CD4-positive, alpha-beta T cell (primary cell): ENCODE measurements at regions of chr17 and their contacts with region 1.

Region 1: GRCh38 chr17:17591355-17592298 is at the start of gene PEMT:
- DNase-seq: peak; percentile 84 to 98 (median 91)
- ATAC-seq: peak; percentile 87
- H3K4me3 ChIP-seq: peak within 1 kb of the TSS; percentile 64
- H3K4me3 Mint-ChIP-seq: peak within 1 kb of the TSS; percentile 89
- H3K27ac ChIP-seq: peak within 1 kb of the TSS; percentile 81 to 85
- H3K27ac Mint-ChIP-seq: peak within 1 kb of the TSS; percentile 92
- H3K4me1 ChIP-seq: peaks cover 25% of the 10 kb centered on the region
- H3K4me1 Mint-ChIP-seq: peaks cover 21% of the 10 kb centered on the region
- H3K27me3 ChIP-seq: no peaks in the 10 kb centered on the region
- H3K27me3 Mint-ChIP-seq: no peaks in the 10 kb centered on the region
- CTCF ChIP-seq: no peak
- total RNA-seq, gene PEMT: 11.4 to 12.0 TPM

Region 2: DNA sequence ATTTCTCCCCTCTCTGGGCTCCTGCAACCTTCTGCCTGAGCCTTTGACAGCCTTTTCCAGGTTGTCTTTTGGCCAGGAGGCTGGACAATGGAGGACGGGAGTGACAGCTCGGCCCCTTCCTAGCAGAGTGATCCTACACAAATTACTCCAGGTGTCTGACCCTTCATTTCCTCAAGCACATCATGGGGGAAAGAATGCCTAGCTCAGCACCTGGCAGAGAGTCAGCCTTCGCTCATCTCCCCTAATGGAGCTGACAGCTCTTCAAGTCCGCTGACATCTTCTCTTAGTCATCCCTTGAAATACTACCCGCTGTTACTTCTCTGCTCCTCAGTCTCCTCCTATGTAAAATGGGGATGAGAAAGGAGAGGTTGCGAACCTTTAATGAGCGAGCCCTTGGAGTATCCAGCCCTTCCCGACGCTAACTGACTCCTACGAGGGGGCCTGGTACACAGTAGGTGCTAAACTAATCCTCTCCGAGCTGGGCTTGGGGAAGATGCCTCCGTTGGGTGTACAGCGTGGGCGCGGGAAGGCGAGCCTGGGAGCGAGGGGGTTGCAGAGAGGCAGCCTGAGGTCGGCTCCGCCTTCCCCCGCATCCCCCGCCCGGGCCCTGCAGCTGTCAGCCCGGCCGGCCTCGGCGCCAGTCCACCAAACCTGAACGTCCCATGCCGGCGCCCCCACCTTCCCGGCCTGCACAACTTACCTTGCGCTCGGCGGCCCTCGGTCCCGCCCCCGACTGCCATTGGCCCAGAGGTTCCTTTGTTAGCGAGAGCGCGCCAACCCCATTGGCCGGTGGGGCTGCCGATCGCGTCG is 549.9 kb before region 1 on chr17:
- CTCF ChIA-PET with region 1: no interaction called
- POLR2A ChIA-PET with region 1: no interaction called
- intact Hi-C with region 1: loop called in 1 of 2 experiments (anchors 5 kb)
- DNase-seq: peak; percentile 92 to 98 (median 97)
- ATAC-seq: peak; percentile 98
- H3K4me3 ChIP-seq: peak overlapping the region; percentile 59
- H3K4me3 Mint-ChIP-seq: peak overlapping the region; percentile 81
- H3K27ac ChIP-seq: no peak overlapping the region
- H3K27ac Mint-ChIP-seq: peak overlapping the region; percentile 70
- H3K4me1 ChIP-seq: peaks cover 40% of the 10 kb centered on the region
- H3K4me1 Mint-ChIP-seq: peaks cover 48% of the 10 kb centered on the region
- H3K27me3 ChIP-seq: no peaks in the 10 kb centered on the region
- H3K27me3 Mint-ChIP-seq: no peaks in the 10 kb centered on the region
- CTCF ChIP-seq: no peak

Region 3: DNA sequence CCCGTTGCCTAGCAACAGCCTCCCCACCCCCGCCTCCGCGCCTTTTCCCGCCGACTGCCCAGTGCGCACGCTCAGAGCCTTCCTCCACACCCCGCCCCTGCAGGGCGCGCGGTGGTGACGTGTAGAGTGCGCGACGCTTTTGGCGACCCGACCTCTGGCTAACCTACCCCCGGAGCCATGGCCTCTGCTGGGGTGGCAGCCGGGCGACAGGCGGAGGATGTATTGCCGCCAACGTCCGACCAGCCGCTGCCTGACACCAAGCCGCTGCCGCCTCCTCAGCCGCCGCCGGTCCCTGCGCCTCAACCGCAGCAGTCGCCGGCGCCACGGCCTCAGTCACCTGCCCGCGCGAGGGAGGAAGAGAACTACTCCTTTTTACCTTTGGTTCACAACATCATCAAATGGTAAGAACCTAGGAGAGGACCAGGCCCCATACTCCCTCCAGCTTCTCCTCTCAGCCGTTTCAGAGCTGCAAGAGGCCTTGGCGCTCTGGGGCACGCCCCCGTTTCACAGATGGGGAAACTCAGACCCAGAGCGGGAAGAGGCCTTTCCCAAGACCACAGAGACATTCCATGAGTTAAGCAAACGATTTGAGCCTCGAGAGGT is 114.7 kb before region 1 on chr17 and contains the start of gene MED9:
- CTCF ChIA-PET with region 1: no interaction called
- POLR2A ChIA-PET with region 1: no interaction called
- intact Hi-C with region 1: loop called in 1 of 2 experiments (anchors 2 kb)
- DNase-seq: peak; percentile 92 to 98 (median 94)
- ATAC-seq: peak; percentile 98
- H3K4me3 ChIP-seq: peak within 1 kb of the TSS; percentile 82
- H3K4me3 Mint-ChIP-seq: peak within 1 kb of the TSS; percentile 91
- H3K27ac ChIP-seq: peak within 1 kb of the TSS; percentile 42 to 58
- H3K27ac Mint-ChIP-seq: peak within 1 kb of the TSS; percentile 87
- H3K4me1 ChIP-seq: peaks cover 42% of the 10 kb centered on the region
- H3K4me1 Mint-ChIP-seq: peaks cover 51% of the 10 kb centered on the region
- H3K27me3 ChIP-seq: peaks cover 0 to 2% of the 10 kb centered on the region in 2 experiments
- H3K27me3 Mint-ChIP-seq: peaks cover 6% of the 10 kb centered on the region
- CTCF ChIP-seq: no peak
- total RNA-seq, gene MED9: 27.0 to 27.9 TPM

Region 4: DNA sequence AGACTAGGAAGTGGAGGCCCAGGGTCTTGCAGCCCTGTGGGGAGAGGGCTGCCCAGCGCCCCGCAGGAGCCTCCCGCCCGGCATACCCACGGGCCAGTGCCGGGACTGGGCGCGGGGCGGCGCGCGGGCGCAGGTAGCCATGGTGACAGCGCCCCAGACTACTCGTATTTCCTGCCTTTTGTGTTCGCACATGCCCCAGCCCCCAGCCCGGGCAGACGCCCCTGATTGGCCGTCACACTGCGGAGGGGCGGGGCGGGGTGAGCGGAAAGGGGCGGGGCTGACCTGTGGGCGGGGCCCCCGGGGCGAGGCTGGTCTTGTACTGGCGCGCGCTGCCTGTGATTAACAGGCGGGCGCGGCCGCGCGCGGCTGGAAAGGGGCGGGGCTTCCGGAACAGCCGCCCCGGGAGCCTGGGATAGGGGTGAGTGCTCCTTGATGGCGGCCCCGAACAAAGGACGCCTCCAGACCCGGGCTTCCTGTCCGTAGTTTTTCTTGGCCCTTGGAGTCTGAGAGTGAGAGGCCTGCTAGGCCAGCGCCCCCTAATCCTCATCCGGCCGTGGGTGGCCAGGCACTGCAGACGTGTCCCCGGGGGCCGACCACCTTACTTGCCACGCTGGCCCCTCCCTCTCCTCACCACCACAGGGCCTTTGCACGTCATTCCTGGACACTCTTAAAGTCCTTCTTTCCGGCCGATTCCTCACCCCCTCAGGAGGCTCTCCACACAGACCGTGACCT is 160.6 kb after region 1 on chr17:
- CTCF ChIA-PET with region 1: no interaction called
- POLR2A ChIA-PET with region 1: no interaction called
- intact Hi-C with region 1: loop called in 1 of 2 experiments (anchors 2 kb)
- DNase-seq: peak; percentile 94 to 98 (median 97)
- ATAC-seq: peak; percentile 82
- H3K4me3 ChIP-seq: peak overlapping the region; percentile 87
- H3K4me3 Mint-ChIP-seq: peak overlapping the region; percentile 67
- H3K27ac ChIP-seq: peak overlapping the region; percentile 89 to 90
- H3K27ac Mint-ChIP-seq: peak overlapping the region; percentile 95
- H3K4me1 ChIP-seq: peaks cover 83% of the 10 kb centered on the region
- H3K4me1 Mint-ChIP-seq: peaks cover 81% of the 10 kb centered on the region
- H3K27me3 ChIP-seq: no peaks in the 10 kb centered on the region
- H3K27me3 Mint-ChIP-seq: no peaks in the 10 kb centered on the region
- CTCF ChIP-seq: peak; percentile 58

Region 5: GRCh38 chr17:18087610-18088491 is 496.2 kb after region 1 on chr17 and contains the start of gene DRG2:
- CTCF ChIA-PET with region 1: no interaction called
- POLR2A ChIA-PET with region 1: interaction called, 3 read pairs
- intact Hi-C with region 1: loop called in 1 of 2 experiments (anchors 5 kb)
- DNase-seq: peak; percentile 79 to 94 (median 84)
- ATAC-seq: peak; percentile 92
- H3K4me3 ChIP-seq: peak within 1 kb of the TSS; percentile 79
- H3K4me3 Mint-ChIP-seq: peak within 1 kb of the TSS; percentile 100
- H3K27ac ChIP-seq: peak within 1 kb of the TSS; percentile 80
- H3K27ac Mint-ChIP-seq: peak within 1 kb of the TSS; percentile 97
- H3K4me1 ChIP-seq: peaks cover 27% of the 10 kb centered on the region
- H3K4me1 Mint-ChIP-seq: peaks cover 32% of the 10 kb centered on the region
- H3K27me3 ChIP-seq: no peaks in the 10 kb centered on the region
- H3K27me3 Mint-ChIP-seq: no peaks in the 10 kb centered on the region
- CTCF ChIP-seq: no peak
- total RNA-seq, gene DRG2: 38.9 to 40.6 TPM